Transverse colon (tissue), 4 donors: ENCODE measurements at regions of chr2 and their contacts with region 1.

Region 1: DNA sequence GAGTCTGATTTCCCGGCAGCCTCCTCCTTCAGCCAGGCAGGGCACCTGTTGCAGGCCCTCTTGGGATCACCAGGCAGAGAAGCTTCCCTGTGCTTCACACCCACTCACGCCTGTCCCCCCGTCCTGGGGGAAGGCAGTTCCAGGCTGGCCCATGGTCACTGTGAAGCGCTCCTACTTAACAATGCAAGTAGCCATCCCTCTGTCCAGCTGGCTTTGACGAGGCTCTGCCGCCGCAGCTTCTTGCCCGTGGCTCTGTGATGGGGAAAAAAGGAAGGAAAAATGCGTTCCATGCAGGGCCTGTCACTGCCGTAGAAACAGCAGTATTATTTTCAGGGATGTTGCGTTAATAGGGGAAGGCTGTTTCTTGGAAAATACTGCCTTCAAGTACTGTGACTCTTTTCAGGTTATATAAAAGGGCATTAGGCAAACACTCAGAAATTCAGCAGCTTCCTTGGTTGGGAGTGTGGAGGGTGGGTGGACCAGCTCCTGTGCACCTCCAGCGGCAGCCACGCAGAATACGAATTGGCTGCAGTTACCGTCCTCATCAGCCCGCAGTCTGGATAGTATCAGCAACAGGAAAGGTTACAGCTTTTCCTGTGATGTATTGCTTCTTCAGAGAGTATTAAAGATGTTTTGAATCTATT is 232.3 kb downstream of the KLHL29 start:
- DNase-seq: peak; percentile 46
- H3K4me3 ChIP-seq: no peak overlapping the region
- H3K27ac ChIP-seq: peak overlapping the region; percentile 77 to 93 (median 84)
- H3K4me1 ChIP-seq: peaks cover 9 to 44% (median 33%) of the 10 kb centered on the region in 4 donors
- H3K27me3 ChIP-seq: no peaks in the 10 kb centered on the region
- CTCF ChIP-seq: peak; percentile 38 to 81 (median 50)
- EP300 ChIP-seq: peak; percentile 32
- POLR2A ChIP-seq: no peak

Region 2: GRCh38 chr2:23434721-23435121 is 182.6 kb before region 1 on chr2:
- in situ Hi-C with region 1: no loop called
- intact Hi-C with region 1: loop called (anchors 2 kb)
- DNase-seq: no peak
- H3K4me3 ChIP-seq: no peak overlapping the region
- H3K27ac ChIP-seq: peak overlapping the region; percentile 77 to 83 (median 78)
- H3K4me1 ChIP-seq: peaks cover 0 to 22% (median 11%) of the 10 kb centered on the region in 4 donors
- H3K27me3 ChIP-seq: no peaks in the 10 kb centered on the region
- CTCF ChIP-seq: no peak
- EP300 ChIP-seq: peak; percentile 78
- POLR2A ChIP-seq: no peak

Region 3: GRCh38 chr2:23526114-23526513 is 91.2 kb before region 1 on chr2:
- in situ Hi-C with region 1: no loop called
- intact Hi-C with region 1: loop called (anchors 5 kb)
- DNase-seq: no peak
- H3K4me3 ChIP-seq: no peak overlapping the region
- H3K27ac ChIP-seq: peak overlapping the region in 1 of 4 donors; percentile 90
- H3K4me1 ChIP-seq: peaks cover 2 to 28% (median 17%) of the 10 kb centered on the region in 4 donors
- H3K27me3 ChIP-seq: no peaks in the 10 kb centered on the region
- CTCF ChIP-seq: no peak
- EP300 ChIP-seq: no peak
- POLR2A ChIP-seq: no peak

Region 4: GRCh38 chr2:23595601-23596251 is 21.6 kb before region 1 on chr2:
- in situ Hi-C with region 1: no loop called
- intact Hi-C with region 1: no loop called
- DNase-seq: no peak
- H3K4me3 ChIP-seq: no peak overlapping the region
- H3K27ac ChIP-seq: peak overlapping the region; percentile 60 to 85 (median 72)
- H3K4me1 ChIP-seq: peaks cover 3 to 37% (median 27%) of the 10 kb centered on the region in 4 donors
- H3K27me3 ChIP-seq: no peaks in the 10 kb centered on the region
- CTCF ChIP-seq: no peak
- EP300 ChIP-seq: no peak
- POLR2A ChIP-seq: no peak

Region 5: DNA sequence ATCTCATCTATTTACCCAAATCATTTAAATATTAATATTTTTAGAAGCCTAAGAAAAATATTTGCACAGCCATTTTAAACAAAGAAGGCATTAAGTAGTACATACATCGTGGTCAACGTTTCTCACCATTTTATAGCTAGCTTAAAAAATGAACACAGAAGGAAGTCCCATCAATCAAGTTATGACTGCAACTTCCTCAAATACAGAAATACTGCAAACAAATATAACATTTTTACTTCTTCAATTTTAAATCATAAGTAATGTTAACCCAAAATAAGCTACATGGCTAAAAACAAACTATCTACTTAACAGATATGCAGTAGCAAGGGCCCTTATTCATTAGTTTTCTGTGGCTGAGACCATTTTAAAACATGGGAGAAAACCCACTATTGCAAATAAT is 712.4 kb after region 1 on chr2:
- in situ Hi-C with region 1: no loop called
- intact Hi-C with region 1: no loop called
- DNase-seq: no peak
- H3K4me3 ChIP-seq: no peak overlapping the region
- H3K27ac ChIP-seq: peak overlapping the region in 1 of 4 donors; percentile 44
- H3K4me1 ChIP-seq: peaks cover 0 to 33% (median 8%) of the 10 kb centered on the region in 4 donors
- H3K27me3 ChIP-seq: no peaks in the 10 kb centered on the region
- CTCF ChIP-seq: no peak
- EP300 ChIP-seq: no peak
- POLR2A ChIP-seq: no peak